GM13976 (cell line): ENCODE measurements at regions of chr15 and their contacts with region 1.

Region 1: DNA sequence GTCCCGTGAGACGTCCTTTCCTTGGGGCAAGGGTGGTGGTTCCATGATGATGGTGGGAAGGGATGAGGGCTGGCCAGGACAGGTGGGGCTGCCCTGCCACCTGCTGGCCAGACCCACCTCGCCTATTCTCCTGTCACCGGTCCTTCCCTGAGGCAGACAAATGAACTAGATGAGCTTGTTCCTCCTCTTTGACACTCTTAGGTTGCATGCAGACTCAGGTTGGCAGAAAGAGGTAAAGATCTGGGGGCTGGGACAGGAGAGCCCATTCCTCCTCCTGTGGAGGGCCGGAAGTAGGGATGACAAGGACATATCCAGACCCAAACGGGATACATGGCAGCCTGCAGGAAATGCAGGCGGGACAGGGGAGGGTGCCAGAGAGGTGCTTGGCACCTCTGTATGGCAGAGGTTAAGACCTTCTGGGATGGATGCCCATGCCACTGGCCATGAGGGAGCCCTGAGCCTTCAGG is 38.6 kb downstream of the ACSBG1 start:
- DNase-seq: peak; percentile 88
- CTCF ChIP-seq: peak; percentile 85

Region 2: GRCh38 chr15:78131295-78132061 is 64.3 kb before region 1 on chr15 and contains the start of gene CIB2:
- in situ Hi-C with region 1: loop called (anchors 10 kb)
- DNase-seq: peak; percentile 96
- CTCF ChIP-seq: peak; percentile 86